MCF 10A (cell line): ENCODE measurements at regions of chr7 and their contacts with region 1.

Region 1: GRCh38 chr7:102236592-102237287 is 49.9 kb upstream of the SH2B2 start:
- DNase-seq: peak; percentile 66
- H3K4me3 Mint-ChIP-seq: no peak overlapping the region
- H3K27ac Mint-ChIP-seq: peak overlapping the region; percentile 19
- H3K4me1 Mint-ChIP-seq: no peaks in the 10 kb centered on the region
- H3K27me3 Mint-ChIP-seq: no peaks in the 10 kb centered on the region
- CTCF ChIP-seq: peak; percentile 93

Region 2: DNA sequence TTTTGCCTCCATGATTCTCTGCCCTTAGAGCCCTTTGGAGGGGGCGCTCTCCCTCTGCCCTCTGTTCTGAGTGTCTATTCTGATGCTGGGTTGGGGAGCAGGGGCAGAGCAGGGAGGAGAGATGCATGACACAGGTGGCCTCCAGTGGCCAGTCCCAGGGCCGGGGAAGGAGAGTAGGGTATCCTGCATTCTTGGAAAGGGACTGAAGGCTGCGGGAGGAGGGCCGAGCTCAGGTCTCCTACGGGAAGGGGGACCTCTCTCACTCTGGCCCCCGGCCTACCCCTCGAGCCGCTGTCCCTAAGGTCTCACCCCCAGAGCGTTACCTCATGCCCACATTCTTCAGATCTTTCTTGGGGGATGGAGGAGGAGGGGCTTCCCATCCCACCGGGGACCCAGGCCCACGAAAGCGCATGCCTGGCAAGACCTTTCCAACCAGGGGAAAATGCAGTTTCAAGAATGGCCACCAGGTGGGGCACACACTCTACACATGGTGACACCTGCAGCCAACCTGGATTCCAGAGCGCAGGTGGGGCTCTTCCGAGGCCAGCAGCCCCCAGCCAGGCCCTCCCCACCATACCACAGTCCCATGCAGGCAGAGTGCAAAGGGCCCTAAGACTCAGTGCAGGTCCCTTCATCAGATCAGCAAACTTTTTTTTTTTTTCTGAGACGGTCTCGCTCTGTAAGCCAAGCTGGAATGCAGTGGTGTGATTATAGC is 694.1 kb before region 1 on chr7:
- CTCF ChIA-PET with region 1: interaction called, 23 read pairs
- POLR2A ChIA-PET with region 1: no interaction called
- intact Hi-C with region 1: no loop called
- DNase-seq: peak; percentile 73
- H3K4me3 Mint-ChIP-seq: no peak overlapping the region
- H3K27ac Mint-ChIP-seq: no peak overlapping the region
- H3K4me1 Mint-ChIP-seq: peaks cover 1% of the 10 kb centered on the region
- H3K27me3 Mint-ChIP-seq: no peaks in the 10 kb centered on the region
- CTCF ChIP-seq: peak; percentile 92

Region 3: DNA sequence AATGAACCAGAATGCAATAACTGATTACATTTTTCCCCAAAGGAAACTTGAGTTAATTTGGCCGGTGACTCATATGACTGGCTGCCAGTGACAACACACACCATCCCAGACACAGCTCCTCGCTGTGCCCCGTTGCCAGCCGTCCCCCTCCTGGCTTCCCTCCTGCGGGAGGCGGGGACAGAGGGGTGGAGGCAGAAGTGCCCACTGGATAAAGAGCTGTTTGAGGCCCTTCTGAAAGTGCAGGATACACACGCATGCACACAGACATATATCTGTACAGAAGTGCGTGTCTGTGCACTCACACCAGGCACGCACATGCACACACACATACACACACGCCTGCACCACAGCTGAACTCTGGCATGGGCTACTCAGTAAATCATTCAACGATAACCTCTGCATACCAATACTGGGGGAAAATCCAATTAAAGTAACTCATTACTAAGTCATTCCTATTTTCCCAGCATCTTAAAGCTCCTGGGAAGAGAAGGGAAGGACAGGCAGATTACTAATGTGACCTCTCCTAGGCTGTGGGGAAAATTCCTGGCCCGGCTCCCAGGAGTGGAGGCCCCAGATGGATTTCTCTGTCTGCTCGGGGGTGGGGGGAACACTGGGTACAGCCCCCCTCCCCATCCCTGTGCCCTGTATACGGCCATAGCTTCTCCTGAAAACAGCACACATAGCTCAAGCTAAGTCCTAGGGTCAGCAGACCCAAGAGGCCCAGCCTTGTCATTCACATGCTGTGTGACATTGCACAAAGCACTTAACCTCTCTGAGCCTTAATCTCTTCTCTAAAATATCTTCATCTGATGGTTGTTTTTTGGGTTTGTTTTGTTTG is 555.4 kb before region 1 on chr7:
- CTCF ChIA-PET with region 1: interaction called, 10 read pairs
- POLR2A ChIA-PET with region 1: no interaction called
- intact Hi-C with region 1: no loop called
- DNase-seq: peak; percentile 89
- H3K4me3 Mint-ChIP-seq: no peak overlapping the region
- H3K27ac Mint-ChIP-seq: no peak overlapping the region
- H3K4me1 Mint-ChIP-seq: peaks cover 21% of the 10 kb centered on the region
- H3K27me3 Mint-ChIP-seq: no peaks in the 10 kb centered on the region
- CTCF ChIP-seq: no peak

Region 4: GRCh38 chr7:101815835-101816493 is 420.8 kb before region 1 on chr7:
- CTCF ChIA-PET with region 1: interaction called, 6 read pairs
- POLR2A ChIA-PET with region 1: no interaction called
- intact Hi-C with region 1: loop called (anchors 2 kb)
- DNase-seq: peak; percentile 79
- H3K4me3 Mint-ChIP-seq: peak overlapping the region; percentile 78
- H3K27ac Mint-ChIP-seq: no peak overlapping the region
- H3K4me1 Mint-ChIP-seq: peaks cover 21% of the 10 kb centered on the region
- H3K27me3 Mint-ChIP-seq: no peaks in the 10 kb centered on the region
- CTCF ChIP-seq: no peak

Region 5: GRCh38 chr7:101882595-101883564 is 353.9 kb before region 1 on chr7:
- CTCF ChIA-PET with region 1: no interaction called
- POLR2A ChIA-PET with region 1: interaction called, 3 read pairs
- intact Hi-C with region 1: loop called (anchors 5 kb)
- DNase-seq: peak; percentile 100
- H3K4me3 Mint-ChIP-seq: peak overlapping the region; percentile 41
- H3K27ac Mint-ChIP-seq: peak overlapping the region; percentile 99
- H3K4me1 Mint-ChIP-seq: peaks cover 30% of the 10 kb centered on the region
- H3K27me3 Mint-ChIP-seq: no peaks in the 10 kb centered on the region
- CTCF ChIP-seq: no peak

Region 6: GRCh38 chr7:102272075-102272917 is 35.6 kb after region 1 on chr7:
- CTCF ChIA-PET with region 1: interaction called, 4 read pairs
- POLR2A ChIA-PET with region 1: no interaction called
- intact Hi-C with region 1: loop called (anchors 1 kb)
- DNase-seq: peak; percentile 84
- H3K4me3 Mint-ChIP-seq: no peak overlapping the region
- H3K27ac Mint-ChIP-seq: no peak overlapping the region
- H3K4me1 Mint-ChIP-seq: peaks cover 13% of the 10 kb centered on the region
- H3K27me3 Mint-ChIP-seq: peaks cover 14% of the 10 kb centered on the region
- CTCF ChIP-seq: peak; percentile 94

Region 7: DNA sequence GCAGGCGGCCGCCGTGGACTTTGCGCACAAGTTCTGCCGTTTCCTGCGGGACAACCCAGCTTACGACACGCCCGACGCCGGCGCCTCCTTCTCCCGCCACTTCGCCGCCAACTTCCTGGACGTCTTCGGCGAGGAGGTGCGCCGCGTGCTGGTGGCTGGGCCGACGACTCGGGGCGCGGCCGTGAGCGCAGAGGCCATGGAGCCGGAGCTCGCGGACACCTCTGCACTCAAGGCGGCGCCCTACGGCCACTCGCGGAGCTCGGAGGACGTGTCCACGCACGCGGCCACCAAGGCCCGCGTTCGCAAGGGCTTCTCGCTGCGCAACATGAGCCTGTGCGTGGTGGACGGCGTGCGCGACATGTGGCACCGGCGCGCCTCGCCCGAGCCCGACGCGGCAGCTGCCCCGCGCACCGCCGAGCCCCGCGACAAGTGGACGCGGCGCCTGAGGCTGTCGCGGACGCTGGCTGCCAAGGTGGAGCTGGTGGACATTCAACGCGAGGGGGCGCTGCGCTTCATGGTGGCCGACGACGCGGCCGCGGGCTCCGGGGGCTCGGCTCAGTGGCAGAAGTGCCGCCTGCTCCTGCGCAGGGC is 64.0 kb after region 1 on chr7:
- CTCF ChIA-PET with region 1: no interaction called
- POLR2A ChIA-PET with region 1: no interaction called
- intact Hi-C with region 1: no loop called
- DNase-seq: no peak
- H3K4me3 Mint-ChIP-seq: no peak overlapping the region
- H3K27ac Mint-ChIP-seq: no peak overlapping the region
- H3K4me1 Mint-ChIP-seq: no peaks in the 10 kb centered on the region
- H3K27me3 Mint-ChIP-seq: no peaks in the 10 kb centered on the region
- CTCF ChIP-seq: no peak